Activated CD4-positive, alpha-beta T cell treated with anti-CD3 and anti-CD28 coated beads for 36 hours (primary cell): ENCODE measurements at regions of chr10 and their contacts with region 1.

Region 1: GRCh38 chr10:35635576-35635975 is 6.5 kb downstream of the FZD8 start:
- DNase-seq: peak; percentile 56
- ATAC-seq: peak; percentile 74
- H3K4me3 Mint-ChIP-seq: no peak overlapping the region
- H3K27ac Mint-ChIP-seq: no peak overlapping the region
- H3K4me1 Mint-ChIP-seq: peaks cover 5% of the 10 kb centered on the region
- H3K27me3 Mint-ChIP-seq: peaks cover 35% of the 10 kb centered on the region

Region 2: GRCh38 chr10:35781643-35782035 is 146.1 kb after region 1 on chr10:
- CTCF ChIA-PET with region 1: no interaction called
- POLR2A ChIA-PET with region 1: no interaction called
- intact Hi-C with region 1: loop called in 1 of 2 experiments (anchors 1 kb)
- DNase-seq: peak; percentile 9
- ATAC-seq: no peak
- H3K4me3 Mint-ChIP-seq: no peak overlapping the region
- H3K27ac Mint-ChIP-seq: no peak overlapping the region
- H3K4me1 Mint-ChIP-seq: no peaks in the 10 kb centered on the region
- H3K27me3 Mint-ChIP-seq: peaks cover 6% of the 10 kb centered on the region

Region 3: DNA sequence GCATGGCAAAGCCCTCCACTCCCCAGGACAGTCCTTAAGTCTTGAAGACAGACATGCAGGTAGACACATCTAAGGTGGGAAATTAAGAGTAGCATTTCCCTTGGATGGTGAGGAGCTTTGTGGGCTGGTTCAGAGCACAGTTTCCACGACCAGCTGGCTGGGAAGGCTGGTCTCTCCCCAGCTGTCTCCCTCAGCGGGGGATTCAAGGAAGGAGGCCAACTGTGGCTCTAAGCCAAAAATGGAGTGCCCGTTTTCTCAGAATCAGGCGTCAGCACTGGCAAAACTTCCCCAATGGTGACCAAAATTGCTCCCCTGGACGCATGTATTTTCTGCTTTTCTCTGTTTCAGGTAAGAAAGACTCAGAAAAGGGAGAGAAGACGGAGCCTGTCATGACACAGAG is 237.1 kb after region 1 on chr10:
- CTCF ChIA-PET with region 1: no interaction called
- POLR2A ChIA-PET with region 1: no interaction called
- intact Hi-C with region 1: no loop called
- DNase-seq: no peak
- ATAC-seq: no peak
- H3K4me3 Mint-ChIP-seq: no peak overlapping the region
- H3K27ac Mint-ChIP-seq: no peak overlapping the region
- H3K4me1 Mint-ChIP-seq: no peaks in the 10 kb centered on the region
- H3K27me3 Mint-ChIP-seq: peaks cover 3% of the 10 kb centered on the region

Region 4: DNA sequence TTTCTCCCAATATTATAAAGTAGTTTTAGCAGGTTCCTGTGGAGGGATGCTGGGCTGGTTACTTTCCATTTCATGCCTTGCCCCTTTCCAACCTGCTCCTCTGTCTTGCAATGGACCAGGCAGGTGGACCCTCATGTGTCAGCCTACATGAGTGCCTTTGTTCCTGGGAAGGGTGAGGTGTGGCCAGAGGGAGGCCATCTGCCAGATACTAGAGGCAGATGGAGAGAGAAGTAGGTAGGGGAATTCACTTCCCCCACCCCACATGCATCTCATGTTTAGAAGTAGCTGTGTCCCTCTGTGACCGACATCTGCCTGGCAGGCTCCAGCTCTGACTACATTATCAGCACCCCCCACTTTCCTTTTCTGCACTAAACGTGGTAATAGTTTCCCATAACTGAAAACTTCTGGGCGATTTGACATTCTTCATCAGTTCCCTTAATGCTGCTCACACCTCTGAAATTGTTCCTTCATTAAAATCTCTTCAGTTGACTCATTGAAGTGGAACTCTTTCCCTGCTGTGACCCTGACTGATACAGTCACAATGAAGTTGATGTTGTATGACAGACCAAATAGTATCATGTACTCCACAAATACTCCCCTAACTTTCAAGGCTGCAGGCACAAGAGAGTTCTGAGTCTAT is 402.9 kb after region 1 on chr10:
- CTCF ChIA-PET with region 1: interaction called, 3 read pairs
- POLR2A ChIA-PET with region 1: no interaction called
- intact Hi-C with region 1: loop called in 1 of 2 experiments (anchors 10 kb)
- DNase-seq: no peak
- ATAC-seq: no peak
- H3K4me3 Mint-ChIP-seq: no peak overlapping the region
- H3K27ac Mint-ChIP-seq: no peak overlapping the region
- H3K4me1 Mint-ChIP-seq: no peaks in the 10 kb centered on the region
- H3K27me3 Mint-ChIP-seq: no peaks in the 10 kb centered on the region

Region 5: GRCh38 chr10:36779234-36779846 is 1143.8 kb after region 1 on chr10:
- CTCF ChIA-PET with region 1: no interaction called
- POLR2A ChIA-PET with region 1: no interaction called
- intact Hi-C with region 1: loop called in 1 of 2 experiments (anchors 5 kb)
- DNase-seq: no peak
- ATAC-seq: no peak
- H3K4me3 Mint-ChIP-seq: no peak overlapping the region
- H3K27ac Mint-ChIP-seq: no peak overlapping the region
- H3K4me1 Mint-ChIP-seq: no peaks in the 10 kb centered on the region
- H3K27me3 Mint-ChIP-seq: no peaks in the 10 kb centered on the region

Region 6: GRCh38 chr10:36880898-36881297 is 1245.3 kb after region 1 on chr10:
- CTCF ChIA-PET with region 1: interaction called, 20 read pairs
- POLR2A ChIA-PET with region 1: no interaction called
- intact Hi-C with region 1: loop called (anchors 1 to 2 kb)
- DNase-seq: no peak
- ATAC-seq: no peak
- H3K4me3 Mint-ChIP-seq: no peak overlapping the region
- H3K27ac Mint-ChIP-seq: no peak overlapping the region
- H3K4me1 Mint-ChIP-seq: no peaks in the 10 kb centered on the region
- H3K27me3 Mint-ChIP-seq: peaks cover 1% of the 10 kb centered on the region

Region 7: DNA sequence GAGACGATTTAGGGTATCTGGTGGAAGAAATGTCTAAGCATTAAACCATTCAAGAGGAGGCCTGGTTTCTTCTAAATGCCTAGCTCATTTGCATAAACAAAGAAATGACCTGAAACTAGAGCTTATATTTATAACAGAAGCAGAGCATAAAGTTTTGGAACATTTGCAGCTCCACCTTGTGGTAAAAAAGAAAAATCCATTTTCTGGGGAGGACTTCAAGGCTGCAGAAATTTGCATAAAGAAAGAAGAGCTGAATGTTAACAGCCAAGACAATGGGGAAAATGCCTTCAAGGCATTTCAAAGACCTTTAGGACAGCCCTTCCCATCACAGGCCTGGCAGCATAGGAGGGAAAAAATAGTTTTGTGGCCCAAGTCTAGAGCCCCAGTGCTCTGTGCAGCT is 1859.8 kb after region 1 on chr10:
- CTCF ChIA-PET with region 1: no interaction called
- POLR2A ChIA-PET with region 1: no interaction called
- intact Hi-C with region 1: loop called in 1 of 2 experiments (anchors 10 kb)
- DNase-seq: no peak
- ATAC-seq: no peak
- H3K4me3 Mint-ChIP-seq: no peak overlapping the region
- H3K27ac Mint-ChIP-seq: no peak overlapping the region
- H3K4me1 Mint-ChIP-seq: no peaks in the 10 kb centered on the region
- H3K27me3 Mint-ChIP-seq: no peaks in the 10 kb centered on the region